Naive thymus-derived CD8-positive, alpha-beta T cell (primary cell): ENCODE measurements at regions of chr12 and their contacts with region 1.

Region 1: GRCh38 chr12:10554228-10554755 is 48.6 kb downstream of the EIF2S3B start:
- DNase-seq: peak; percentile 22 to 90 (median 82)
- ATAC-seq: peak; percentile 65 to 66
- H3K4me3 Mint-ChIP-seq: peak overlapping the region; percentile 84 to 99 (median 96)
- H3K27ac Mint-ChIP-seq: peak overlapping the region; percentile 95 to 100 (median 100)
- H3K4me1 Mint-ChIP-seq: peaks cover 30 to 61% (median 50%) of the 10 kb centered on the region in 4 donors
- H3K27me3 Mint-ChIP-seq: no peaks in the 10 kb centered on the region

Region 2: DNA sequence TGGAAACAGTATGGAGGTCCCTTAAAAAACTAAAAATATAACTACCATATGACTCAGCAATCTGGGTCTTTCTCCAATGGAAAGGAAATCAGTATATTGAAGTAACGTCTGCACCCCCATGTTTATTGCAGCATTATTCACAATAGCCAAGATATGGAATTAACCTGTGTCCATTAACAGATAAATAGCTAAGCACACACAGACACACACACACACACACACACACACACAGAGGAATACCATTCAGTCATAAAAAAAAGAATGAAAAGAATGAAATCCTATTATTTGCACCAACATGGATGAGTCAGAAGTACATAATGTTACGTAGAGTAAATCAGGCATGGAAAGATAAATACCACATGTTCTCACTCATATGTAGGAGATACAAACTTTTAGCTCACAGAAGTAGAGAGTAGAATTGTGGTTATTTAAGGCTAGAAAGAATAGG is 169.1 kb before region 1 on chr12:
- POLR2A ChIA-PET with region 1: interaction called, 41 read pairs
- DNase-seq: no peak
- ATAC-seq: peak; percentile 24 to 40
- H3K4me3 Mint-ChIP-seq: peak overlapping the region; percentile 85 to 96 (median 90)
- H3K27ac Mint-ChIP-seq: peak overlapping the region; percentile 86 to 98 (median 94)
- H3K4me1 Mint-ChIP-seq: peaks cover 28 to 57% (median 36%) of the 10 kb centered on the region in 4 donors
- H3K27me3 Mint-ChIP-seq: no peaks in the 10 kb centered on the region

Region 3: GRCh38 chr12:10409387-10409786 is 144.9 kb before region 1 on chr12 and contains the start of gene KLRC4:
- POLR2A ChIA-PET with region 1: interaction called, 14 read pairs
- DNase-seq: peak in 6 of 10 donors; percentile 7 to 68 (median 52)
- ATAC-seq: peak; percentile 81 to 89
- H3K4me3 Mint-ChIP-seq: peak within 1 kb of the TSS; percentile 86 to 97 (median 90)
- H3K27ac Mint-ChIP-seq: peak within 1 kb of the TSS; percentile 38 to 98 (median 92)
- H3K4me1 Mint-ChIP-seq: peaks cover 9 to 36% (median 25%) of the 10 kb centered on the region in 4 donors
- H3K27me3 Mint-ChIP-seq: no peaks in the 10 kb centered on the region
- polyA plus RNA-seq, gene KLRC4: 1.3 to 31.8 (median 13.6) TPM

Region 4: DNA sequence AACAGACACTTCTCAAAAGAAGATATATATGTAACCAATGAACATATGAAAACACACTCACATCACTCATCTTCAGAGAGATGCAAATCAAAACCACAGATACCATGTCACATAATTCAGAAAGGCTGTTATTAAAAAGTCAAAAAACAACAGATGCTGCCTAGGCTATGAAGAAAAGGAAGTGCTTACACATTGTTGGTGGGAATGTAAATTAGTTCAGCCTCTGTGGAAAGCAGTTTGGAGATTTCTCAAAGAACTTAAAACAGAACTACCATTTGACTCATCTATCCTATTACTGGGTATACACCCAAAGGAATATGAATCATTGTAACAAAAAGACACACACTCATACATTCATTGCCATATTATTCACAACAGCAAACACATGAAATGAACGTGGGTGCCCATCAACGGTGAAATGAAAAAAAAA is 13.5 kb before region 1 on chr12:
- POLR2A ChIA-PET with region 1: interaction called, 12 read pairs
- DNase-seq: peak in 2 of 10 donors; percentile 41 to 50
- ATAC-seq: peak; percentile 81 to 92
- H3K4me3 Mint-ChIP-seq: peak overlapping the region in 5 of 10 donors; percentile 13 to 44 (median 40)
- H3K27ac Mint-ChIP-seq: peak overlapping the region; percentile 4 to 87 (median 50)
- H3K4me1 Mint-ChIP-seq: peaks cover 25 to 66% (median 35%) of the 10 kb centered on the region in 4 donors
- H3K27me3 Mint-ChIP-seq: no peaks in the 10 kb centered on the region